ENCODE measurements at regions of chr16 and their contacts with region 1.

Region 1: DNA sequence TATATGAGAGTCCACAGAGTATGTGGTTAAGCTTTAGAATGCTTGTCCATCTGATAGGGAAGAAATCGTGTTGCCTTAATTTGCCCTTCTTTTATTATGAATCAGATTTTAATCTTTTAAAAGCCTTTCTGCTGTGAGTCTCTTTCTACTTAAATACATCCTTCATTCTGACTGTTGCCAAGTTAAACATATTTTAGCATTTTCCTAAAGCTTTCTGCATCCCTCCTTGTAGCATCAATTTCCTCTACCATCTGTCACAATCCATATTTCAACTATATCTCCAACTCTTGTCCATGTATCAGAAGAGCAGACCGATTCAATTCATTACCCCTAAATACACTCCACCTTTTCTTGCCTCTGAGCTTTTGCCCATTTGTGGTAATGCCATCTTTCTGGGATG is 20.5 kb upstream of the FA2H start:
- DNase-seq: no peak
- H3K4me3 ChIP-seq: no peak overlapping the region
- H3K27ac ChIP-seq: no peak overlapping the region
- H3K4me1 ChIP-seq: 0 out of 2 replicates have a peak, but pooled peaks cover 4% of the 10 kb centered on the region
- H3K27me3 ChIP-seq: 0 out of 2 replicates have a peak, but pooled peaks cover 7% of the 10 kb centered on the region
- CTCF ChIP-seq: no peak

Region 2: GRCh38 chr16:75087375-75087979 is 292.4 kb after region 1 on chr16:
- CTCF ChIA-PET with region 1: no interaction called
- POLR2A ChIA-PET with region 1: no interaction called
- intact Hi-C with region 1: no loop called
- DNase-seq: no peak
- H3K4me3 ChIP-seq: no peak overlapping the region
- H3K27ac ChIP-seq: no peak overlapping the region
- H3K4me1 ChIP-seq: peaks cover 27% of the 10 kb centered on the region
- H3K27me3 ChIP-seq: no peaks in the 10 kb centered on the region
- CTCF ChIP-seq: no peak

Region 3: DNA sequence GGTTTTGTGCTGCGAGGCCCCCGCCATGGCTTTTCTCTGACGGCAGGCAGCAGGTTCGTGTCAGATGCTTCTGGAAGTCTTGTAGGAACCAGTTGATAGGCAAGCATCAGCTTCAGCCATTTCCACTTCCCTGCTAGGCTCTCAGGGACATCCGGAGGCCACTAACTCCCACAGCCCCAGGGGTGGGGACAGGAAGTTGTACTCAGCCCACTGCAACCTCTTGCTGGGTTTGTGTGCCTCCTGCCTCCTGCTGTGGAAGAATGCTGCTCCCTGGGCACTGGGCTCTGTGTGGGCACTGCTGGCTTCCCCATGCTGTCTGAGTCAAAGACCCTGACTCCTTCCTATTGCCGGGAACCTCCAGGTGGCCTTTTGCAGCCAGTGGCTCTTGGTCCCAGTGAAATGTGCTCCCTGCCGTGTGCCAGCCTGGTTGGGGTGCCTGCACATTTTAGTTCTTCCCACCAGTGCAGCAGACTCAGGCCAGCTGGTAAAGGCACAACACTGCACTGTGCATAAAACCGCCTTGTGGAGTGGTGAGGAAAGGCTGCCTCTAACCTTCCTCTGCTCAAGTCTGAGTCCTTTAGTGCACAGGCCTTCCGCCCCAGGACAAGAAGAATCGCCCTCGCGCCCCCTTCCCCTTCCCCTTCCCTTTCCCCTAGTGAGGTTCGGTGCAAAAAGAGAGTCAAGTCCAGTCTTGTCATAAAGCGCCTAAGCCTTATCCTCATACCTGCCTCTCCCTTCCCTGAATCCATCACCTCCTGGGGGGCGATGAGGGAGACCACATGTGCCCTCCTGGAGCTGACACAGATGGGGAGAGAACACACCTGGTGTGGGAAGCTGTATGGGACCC is 304.9 kb after region 1 on chr16:
- CTCF ChIA-PET with region 1: no interaction called
- POLR2A ChIA-PET with region 1: no interaction called
- intact Hi-C with region 1: no loop called
- DNase-seq: no peak
- H3K4me3 ChIP-seq: no peak overlapping the region
- H3K27ac ChIP-seq: no peak overlapping the region
- H3K4me1 ChIP-seq: peaks cover 27% of the 10 kb centered on the region
- H3K27me3 ChIP-seq: no peaks in the 10 kb centered on the region
- CTCF ChIP-seq: no peak

Region 4: DNA sequence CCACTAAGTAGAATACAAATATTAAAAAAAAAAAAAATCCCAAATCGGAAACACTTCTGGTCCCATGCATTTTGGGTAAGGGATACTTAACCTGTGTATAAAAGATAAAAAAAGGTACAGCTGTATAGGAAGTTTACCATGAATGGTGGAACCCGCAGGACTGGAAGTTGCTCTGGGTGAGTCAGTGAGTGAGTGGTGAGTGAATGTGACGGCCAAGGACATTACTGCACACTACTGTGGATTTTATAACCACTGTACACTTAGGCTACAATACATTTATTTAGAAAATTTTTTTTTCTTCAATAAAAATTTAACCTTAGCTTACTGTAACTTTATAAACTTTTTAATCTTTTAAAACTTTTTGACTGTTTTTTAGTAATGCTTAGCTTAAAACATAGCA is 527.6 kb after region 1 on chr16:
- CTCF ChIA-PET with region 1: no interaction called
- POLR2A ChIA-PET with region 1: interaction called, 20 read pairs
- intact Hi-C with region 1: no loop called
- DNase-seq: peak; percentile 18 to 68
- H3K4me3 ChIP-seq: no peak overlapping the region
- H3K27ac ChIP-seq: peak overlapping the region; percentile 70
- H3K4me1 ChIP-seq: peaks cover 26% of the 10 kb centered on the region
- H3K27me3 ChIP-seq: no peaks in the 10 kb centered on the region
- CTCF ChIP-seq: no peak

Region 5: GRCh38 chr16:75947626-75948239 is 1152.6 kb after region 1 on chr16:
- CTCF ChIA-PET with region 1: no interaction called
- POLR2A ChIA-PET with region 1: no interaction called
- intact Hi-C with region 1: no loop called
- DNase-seq: no peak
- H3K4me3 ChIP-seq: no peak overlapping the region
- H3K27ac ChIP-seq: no peak overlapping the region
- H3K4me1 ChIP-seq: no peaks in the 10 kb centered on the region
- H3K27me3 ChIP-seq: 0 out of 2 replicates have a peak, but pooled peaks cover 6% of the 10 kb centered on the region
- CTCF ChIP-seq: no peak